AG04450 (cell line): ENCODE measurements at regions of chr20 and their contacts with region 1.

Region 1: GRCh38 chr20:47241345-47241781 is 115.1 kb downstream of the ZMYND8 start:
- DNase-seq: peak; percentile 97
- H3K4me3 ChIP-seq: no peak overlapping the region
- H3K27ac ChIP-seq: peak overlapping the region; percentile 84
- H3K27me3 ChIP-seq: no peaks in the 10 kb centered on the region
- CTCF ChIP-seq: no peak

Region 2: GRCh38 chr20:47265214-47265613 is 23.9 kb after region 1 on chr20:
- CTCF ChIA-PET with region 1: no interaction called
- POLR2A ChIA-PET with region 1: no interaction called
- DNase-seq: no peak
- H3K4me3 ChIP-seq: no peak overlapping the region
- H3K27ac ChIP-seq: no peak overlapping the region
- H3K27me3 ChIP-seq: no peaks in the 10 kb centered on the region
- CTCF ChIP-seq: no peak

Region 3: DNA sequence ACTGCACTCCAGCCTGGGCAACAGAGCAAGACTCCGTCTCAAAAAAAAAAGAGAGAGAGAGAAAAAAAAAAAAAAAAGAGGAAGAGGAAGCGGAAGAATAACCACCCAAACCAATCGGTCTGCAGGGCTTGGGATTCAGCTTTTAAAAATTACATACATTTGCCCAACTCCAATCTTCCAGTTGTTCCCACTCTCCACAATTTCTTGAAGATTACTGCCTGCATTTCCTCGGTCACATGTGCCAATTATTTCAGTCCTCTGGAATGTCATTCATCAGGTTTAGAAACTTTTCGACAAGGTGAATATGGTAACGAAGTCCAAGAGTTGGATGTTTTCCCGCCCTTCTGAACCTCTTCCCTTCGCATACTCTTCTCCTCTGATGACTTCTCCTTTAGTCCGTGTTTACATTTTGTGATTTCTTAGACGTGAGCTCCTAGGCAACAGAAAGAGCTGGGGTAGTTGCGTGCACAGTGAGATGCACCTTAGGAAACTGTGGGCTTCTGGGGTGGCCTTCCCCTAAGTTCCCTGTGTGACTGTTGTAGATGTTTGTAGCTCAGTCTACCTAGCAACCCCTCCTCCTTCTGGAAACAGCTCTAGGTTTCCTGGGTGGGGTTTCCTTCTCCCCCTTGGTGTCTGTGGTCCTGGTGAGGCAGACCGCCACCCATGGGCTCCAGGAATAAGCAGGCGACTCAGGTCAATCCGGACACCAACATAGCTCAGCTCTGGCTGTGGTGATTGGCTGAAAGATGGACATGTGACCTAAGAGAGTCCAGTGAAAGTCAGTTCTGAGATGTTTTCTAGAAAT is 197.4 kb after region 1 on chr20:
- CTCF ChIA-PET with region 1: no interaction called
- POLR2A ChIA-PET with region 1: no interaction called
- DNase-seq: no peak
- H3K4me3 ChIP-seq: no peak overlapping the region
- H3K27ac ChIP-seq: no peak overlapping the region
- H3K27me3 ChIP-seq: no peaks in the 10 kb centered on the region
- CTCF ChIP-seq: no peak

Region 4: GRCh38 chr20:47527004-47527757 is 285.8 kb after region 1 on chr20:
- CTCF ChIA-PET with region 1: no interaction called
- POLR2A ChIA-PET with region 1: interaction called, 10 read pairs
- DNase-seq: no peak
- H3K4me3 ChIP-seq: no peak overlapping the region
- H3K27ac ChIP-seq: no peak overlapping the region
- H3K27me3 ChIP-seq: no peaks in the 10 kb centered on the region
- CTCF ChIP-seq: no peak

Region 5: DNA sequence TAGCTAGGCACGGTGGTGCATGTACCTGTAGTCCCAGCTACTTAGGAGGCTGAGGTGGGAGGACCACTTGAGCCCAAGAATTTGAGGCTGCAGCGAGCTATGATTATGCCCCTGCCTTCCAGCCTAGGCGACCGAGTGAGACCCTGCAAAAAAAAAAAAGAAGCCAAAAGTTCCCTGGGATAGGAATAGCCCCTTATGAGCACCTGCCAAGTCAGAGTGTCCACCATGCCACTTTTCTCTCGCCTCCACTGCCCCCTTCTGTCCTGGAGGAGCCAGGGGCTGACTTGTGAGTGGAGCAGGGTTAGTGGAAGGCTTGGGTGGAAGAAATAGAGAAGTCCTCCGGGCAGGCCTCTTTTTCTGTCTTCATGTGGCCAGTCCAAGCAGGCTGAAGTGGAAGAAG is 1965.7 kb after region 1 on chr20:
- CTCF ChIA-PET with region 1: no interaction called
- POLR2A ChIA-PET with region 1: interaction called, 10 read pairs
- DNase-seq: no peak
- H3K4me3 ChIP-seq: no peak overlapping the region
- H3K27ac ChIP-seq: no peak overlapping the region
- H3K27me3 ChIP-seq: no peaks in the 10 kb centered on the region
- CTCF ChIP-seq: no peak